ENCODE measurements at regions of chr12 and their contacts with region 1.

Region 1: GRCh38 chr12:52230327-52231291 is 2.4 kb upstream of the KRT7 start:
- DNase-seq: peak in 1 of 2 donors; percentile 77
- ATAC-seq: peak; percentile 53
- H3K4me3 ChIP-seq: no peak overlapping the region
- H3K27ac ChIP-seq: peak overlapping the region in 1 of 2 donors; percentile 95
- H3K4me1 ChIP-seq: peaks cover 0 to 4% of the 10 kb centered on the region in 2 donors
- H3K27me3 ChIP-seq: no peaks in the 10 kb centered on the region

Region 2: DNA sequence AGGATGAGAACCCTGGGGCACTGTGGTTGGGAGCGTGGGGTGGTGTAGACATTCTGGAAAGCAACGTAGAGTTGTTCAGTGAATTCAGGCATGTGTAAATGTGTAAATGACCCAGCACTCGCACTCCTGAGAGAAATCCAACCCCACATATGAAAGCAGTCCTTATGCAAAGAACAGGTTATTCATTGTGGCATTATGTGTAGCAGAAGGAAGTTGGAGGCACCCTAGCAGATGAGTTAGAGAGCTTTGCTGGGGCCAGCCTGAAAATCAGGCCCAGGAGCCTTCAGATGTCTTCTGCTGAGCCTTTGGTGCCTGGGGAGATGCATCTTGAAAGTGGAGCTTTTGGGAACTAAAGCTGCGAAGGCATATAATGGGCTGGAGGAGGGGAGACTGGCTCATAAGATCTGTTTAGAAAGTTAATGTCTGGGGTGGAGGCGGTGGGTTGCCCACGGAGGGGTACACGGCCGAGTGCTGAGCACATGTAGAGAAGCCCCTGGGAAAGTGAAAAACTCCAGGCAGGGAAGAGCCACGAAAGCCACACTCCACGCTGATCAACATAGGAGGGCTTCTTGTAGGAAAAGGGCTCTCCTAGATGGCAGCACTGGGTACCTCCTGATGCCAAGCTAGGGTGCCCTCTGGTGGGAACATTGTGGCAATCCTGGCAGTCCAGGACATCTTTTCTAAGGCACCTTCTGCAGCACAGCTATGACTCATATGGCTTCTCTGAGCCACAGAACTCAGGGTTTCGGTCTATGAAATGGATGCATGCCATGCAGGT is 96.6 kb after region 1 on chr12:
- intact Hi-C with region 1: loop called in 1 of 2 experiments (anchors 5 kb)
- DNase-seq: peak; percentile 86 to 88
- ATAC-seq: peak; percentile 81
- H3K4me3 ChIP-seq: no peak overlapping the region
- H3K27ac ChIP-seq: peak overlapping the region in 1 of 2 donors; percentile 27
- H3K4me1 ChIP-seq: no peaks in the 10 kb centered on the region
- H3K27me3 ChIP-seq: no peaks in the 10 kb centered on the region